Calu3 (cell line): ENCODE measurements at regions of chr15 and their contacts with region 1.

Region 1: GRCh38 chr15:62782039-62782791 is 260.3 kb upstream of the TPM1 start:
- DNase-seq: peak; percentile 83
- H3K4me3 Mint-ChIP-seq: no peak overlapping the region
- H3K27ac Mint-ChIP-seq: peak overlapping the region; percentile 82
- H3K4me1 Mint-ChIP-seq: peaks cover 49% of the 10 kb centered on the region
- H3K27me3 Mint-ChIP-seq: no peaks in the 10 kb centered on the region
- CTCF ChIP-seq: peak; percentile 83

Region 2: DNA sequence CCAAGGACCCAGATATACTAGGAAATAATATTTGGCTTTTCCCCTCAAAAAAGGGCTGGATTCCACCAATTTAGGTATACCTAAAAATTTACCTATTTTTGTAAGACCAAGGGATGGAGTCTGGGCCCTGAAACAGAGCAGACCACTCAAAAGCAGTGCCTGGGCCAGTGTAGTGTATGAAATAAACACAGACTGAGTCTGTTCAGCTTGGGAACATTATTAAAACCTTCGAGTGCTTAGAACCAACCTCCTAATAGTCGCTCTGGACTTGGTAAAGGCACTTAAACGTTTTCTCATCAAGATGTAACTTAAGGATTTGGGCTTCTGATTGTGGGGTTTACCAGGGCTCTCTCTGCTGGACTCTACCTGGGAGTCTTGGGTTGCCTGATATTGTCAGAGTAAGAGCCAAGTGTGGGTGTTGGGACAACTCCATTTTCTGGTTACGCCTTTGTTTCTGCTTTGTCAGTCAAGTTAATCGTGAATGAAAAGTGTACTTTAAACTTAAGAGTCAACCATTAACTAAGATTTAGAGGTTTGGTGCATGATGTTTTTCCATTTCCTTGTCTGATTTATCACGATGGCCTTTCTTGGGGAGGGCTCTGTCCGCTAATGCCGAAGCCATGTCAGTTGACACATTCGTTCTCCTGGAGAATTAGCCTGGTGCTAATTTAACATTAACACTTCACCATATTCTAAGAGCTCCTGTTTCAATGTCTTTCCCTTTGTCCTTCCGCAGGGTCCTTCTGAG is 39.3 kb after region 1 on chr15:
- CTCF ChIA-PET with region 1: interaction called, 6 read pairs
- intact Hi-C with region 1: loop called (anchors 2 kb)
- DNase-seq: peak; percentile 68
- H3K4me3 Mint-ChIP-seq: peak overlapping the region; percentile 46
- H3K27ac Mint-ChIP-seq: peak overlapping the region; percentile 98
- H3K4me1 Mint-ChIP-seq: peaks cover 76% of the 10 kb centered on the region
- H3K27me3 Mint-ChIP-seq: no peaks in the 10 kb centered on the region
- CTCF ChIP-seq: no peak

Region 3: DNA sequence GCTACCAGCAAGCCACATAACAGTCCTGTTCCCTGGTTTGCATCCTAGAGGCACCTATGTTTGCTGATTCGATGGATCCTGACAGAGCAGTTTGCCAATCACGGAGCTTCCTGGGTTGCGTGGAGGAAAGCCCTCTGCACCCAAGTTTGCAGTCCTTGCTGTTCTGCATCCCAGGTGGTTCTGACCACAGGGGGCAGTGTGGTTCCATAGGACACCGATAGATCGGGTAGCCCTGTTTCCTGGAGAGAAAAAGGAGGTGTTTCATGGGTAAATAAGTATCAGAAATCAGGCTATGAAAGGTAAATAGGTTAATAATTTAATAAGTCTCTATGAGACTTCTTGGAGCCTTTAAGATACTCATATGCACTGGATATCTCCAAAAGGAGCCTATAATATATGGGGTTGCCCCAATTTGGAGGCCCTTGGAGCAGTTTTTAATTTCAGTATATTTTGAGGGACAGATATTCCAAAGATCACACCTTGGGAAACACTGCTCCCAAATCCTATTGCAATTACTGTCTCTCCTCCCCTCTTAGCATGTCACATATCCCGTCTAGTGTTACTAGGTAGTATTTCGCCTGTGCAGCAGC is 65.8 kb after region 1 on chr15:
- CTCF ChIA-PET with region 1: interaction called, 16 read pairs
- intact Hi-C with region 1: loop called (anchors 1 kb)
- DNase-seq: peak; percentile 85
- H3K4me3 Mint-ChIP-seq: no peak overlapping the region
- H3K27ac Mint-ChIP-seq: peak overlapping the region; percentile 76
- H3K4me1 Mint-ChIP-seq: peaks cover 85% of the 10 kb centered on the region
- H3K27me3 Mint-ChIP-seq: no peaks in the 10 kb centered on the region
- CTCF ChIP-seq: peak; percentile 69

Region 4: DNA sequence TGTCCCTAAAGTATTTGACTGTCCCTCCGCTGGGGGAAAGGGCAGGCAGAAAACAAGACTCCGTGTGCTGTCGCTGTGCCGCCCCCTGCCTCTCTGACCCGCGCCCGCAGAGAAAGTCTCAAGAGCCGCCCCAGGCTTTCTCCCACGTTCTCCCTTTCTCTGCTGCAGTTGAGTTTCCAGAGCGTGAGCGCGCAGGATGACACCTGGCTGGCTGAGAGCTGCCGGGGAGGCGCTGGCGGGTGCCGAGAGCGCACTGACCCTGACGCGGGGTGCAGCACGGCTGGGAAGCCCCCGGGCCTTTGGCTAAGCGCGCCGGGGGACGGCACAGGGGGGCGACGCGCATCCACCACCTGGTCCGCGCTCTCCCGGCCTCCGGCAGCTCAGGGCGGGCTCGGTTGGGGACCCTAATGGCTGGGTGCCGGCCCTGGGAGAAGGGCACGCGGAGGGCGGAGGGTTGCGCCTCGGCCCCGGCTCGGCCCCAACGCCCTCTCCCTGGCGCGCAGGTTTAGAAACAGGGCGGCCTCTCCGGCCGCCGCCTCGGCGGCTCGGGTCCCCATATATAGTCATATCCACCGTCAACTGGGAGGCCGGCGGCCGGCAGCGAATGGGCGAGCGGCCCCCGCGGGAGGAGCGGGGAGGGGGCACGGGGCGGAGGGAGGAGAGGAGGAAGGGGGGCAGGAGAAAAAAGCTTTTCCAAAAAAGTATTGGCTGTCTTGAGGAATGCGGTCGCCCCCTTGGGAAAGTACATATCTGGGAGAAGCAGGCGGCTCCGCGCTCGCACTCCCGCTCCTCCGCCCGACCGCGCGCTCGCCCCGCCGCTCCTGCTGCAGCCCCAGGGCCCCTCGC is 260.0 kb after region 1 on chr15 and contains the start of gene TPM1:
- CTCF ChIA-PET with region 1: interaction called, 34 read pairs
- intact Hi-C with region 1: loop called (anchors 2 kb)
- DNase-seq: peak; percentile 96
- H3K4me3 Mint-ChIP-seq: peak within 1 kb of the TSS; percentile 98
- H3K27ac Mint-ChIP-seq: peak within 1 kb of the TSS; percentile 77
- H3K4me1 Mint-ChIP-seq: peaks cover 54% of the 10 kb centered on the region
- H3K27me3 Mint-ChIP-seq: no peaks in the 10 kb centered on the region
- CTCF ChIP-seq: no peak
- total RNA-seq, gene TPM1: 691 and 1,158 TPM in 2 replicates

Region 5: GRCh38 chr15:63048115-63048775 is 266.0 kb after region 1 on chr15:
- CTCF ChIA-PET with region 1: interaction called, 34 read pairs
- intact Hi-C with region 1: loop called (anchors 1 kb)
- DNase-seq: peak; percentile 99
- H3K4me3 Mint-ChIP-seq: peak overlapping the region; percentile 98
- H3K27ac Mint-ChIP-seq: peak overlapping the region; percentile 77
- H3K4me1 Mint-ChIP-seq: peaks cover 76% of the 10 kb centered on the region
- H3K27me3 Mint-ChIP-seq: no peaks in the 10 kb centered on the region
- CTCF ChIP-seq: peak; percentile 91

Region 6: DNA sequence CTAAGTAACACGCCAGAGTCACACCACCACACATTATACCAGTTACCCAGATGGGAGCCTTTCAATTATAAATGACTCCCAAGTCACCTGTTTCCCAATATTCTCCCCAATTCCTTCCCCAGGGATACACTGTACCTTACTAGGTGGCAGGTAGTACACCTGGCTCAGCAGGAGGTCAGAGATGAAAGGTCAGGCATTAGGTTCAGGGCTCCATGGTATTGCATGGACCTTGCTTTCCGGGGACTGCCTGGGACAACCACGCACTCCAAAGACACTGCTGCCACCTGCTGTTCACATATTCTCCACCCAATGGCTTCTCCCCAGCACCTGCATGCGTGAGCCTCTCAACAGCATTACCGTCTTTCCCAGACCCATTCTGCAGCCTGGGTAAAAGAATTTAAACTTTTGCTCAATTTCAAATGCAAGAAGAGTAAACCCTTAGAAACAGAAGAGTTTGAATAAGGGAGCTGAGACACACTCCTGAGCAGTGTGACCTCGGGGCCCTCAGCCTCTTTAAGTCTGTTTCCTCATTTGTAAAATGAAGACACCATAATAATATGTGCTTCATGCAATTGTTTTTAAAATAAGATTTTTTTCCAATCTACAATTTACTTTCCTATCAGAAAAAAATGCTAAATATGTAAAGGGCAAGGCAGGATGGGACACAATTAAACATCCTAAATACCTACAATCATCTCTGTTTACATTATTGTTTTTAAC is 311.4 kb after region 1 on chr15:
- CTCF ChIA-PET with region 1: interaction called, 8 read pairs
- intact Hi-C with region 1: loop called (anchors 1 kb)
- DNase-seq: peak; percentile 89
- H3K4me3 Mint-ChIP-seq: no peak overlapping the region
- H3K27ac Mint-ChIP-seq: no peak overlapping the region
- H3K4me1 Mint-ChIP-seq: peaks cover 8% of the 10 kb centered on the region
- H3K27me3 Mint-ChIP-seq: no peaks in the 10 kb centered on the region
- CTCF ChIP-seq: peak; percentile 94